ENCODE measurements at regions of chr2 and their contacts with region 1.

Region 1: GRCh38 chr2:68441179-68441993 is 25.7 kb downstream of the FBXO48 start:
- H3K4me3 ChIP-seq: no peak overlapping the region
- H3K27ac ChIP-seq: no peak overlapping the region
- H3K4me1 ChIP-seq: peaks cover 2% of the 10 kb centered on the region; the same call in 1 of the 2 replicates
- CTCF ChIP-seq: peak; percentile 85

Region 2: GRCh38 chr2:68282811-68283418 is 158.5 kb before region 1 on chr2:
- CTCF ChIA-PET with region 1: interaction called, 18 read pairs
- POLR2A ChIA-PET with region 1: no interaction called
- H3K4me3 ChIP-seq: no peak overlapping the region
- H3K27ac ChIP-seq: no peak overlapping the region
- H3K4me1 ChIP-seq: peaks cover 7% of the 10 kb centered on the region
- CTCF ChIP-seq: no peak

Region 3: GRCh38 chr2:68362069-68362468 is 79.3 kb before region 1 on chr2:
- CTCF ChIA-PET with region 1: interaction called, 18 read pairs
- POLR2A ChIA-PET with region 1: no interaction called
- H3K4me3 ChIP-seq: no peak overlapping the region
- H3K27ac ChIP-seq: no peak overlapping the region
- H3K4me1 ChIP-seq: no peaks in the 10 kb centered on the region
- CTCF ChIP-seq: peak; percentile 39; the same call in 1 of the 2 replicates

Region 4: GRCh38 chr2:68426848-68427579 is 14.4 kb before region 1 on chr2:
- CTCF ChIA-PET with region 1: interaction called, 14 read pairs
- POLR2A ChIA-PET with region 1: no interaction called
- H3K4me3 ChIP-seq: no peak overlapping the region
- H3K27ac ChIP-seq: no peak overlapping the region
- H3K4me1 ChIP-seq: no peaks in the 10 kb centered on the region
- CTCF ChIP-seq: no peak